ENCODE measurements at regions of chr16 and their contacts with region 1.

Region 1: DNA sequence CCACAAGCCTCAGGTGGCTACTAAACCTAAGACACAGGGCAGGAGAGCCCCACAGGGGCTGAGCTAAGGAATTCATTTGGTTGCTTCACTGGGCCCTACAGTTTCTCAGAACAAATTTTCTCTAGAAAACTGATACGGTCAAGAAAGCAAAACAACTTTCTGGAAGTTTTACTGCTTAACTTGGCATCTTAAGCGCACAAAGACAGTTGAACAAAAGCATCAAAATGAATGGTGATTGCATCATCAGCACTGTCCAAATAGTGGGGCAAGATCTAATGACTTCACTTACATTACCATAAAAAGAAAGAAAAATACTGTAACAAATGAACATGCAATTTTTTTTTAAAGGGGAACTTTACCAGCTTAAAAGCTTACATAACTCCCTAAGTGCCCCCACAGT is 47.6 kb downstream of the XPO6 start:
- DNase-seq: no peak
- ATAC-seq: no peak
- H3K4me3 ChIP-seq: no peak overlapping the region
- H3K4me3 Mint-ChIP-seq: peak overlapping the region in 4 of 10 donors; percentile 9 to 69 (median 42)
- H3K27ac ChIP-seq: no peak overlapping the region
- H3K27ac Mint-ChIP-seq: peak overlapping the region in 8 of 9 donors; percentile 43 to 95 (median 82)
- H3K4me1 ChIP-seq: peaks cover 13 to 66% of the 10 kb centered on the region in 2 donors
- H3K4me1 Mint-ChIP-seq: peaks cover 62 to 96% (median 86%) of the 10 kb centered on the region in 7 donors
- H3K27me3 ChIP-seq: no peaks in the 10 kb centered on the region
- H3K27me3 Mint-ChIP-seq: no peaks in the 10 kb centered on the region

Region 2: GRCh38 chr16:28090646-28091377 is 73.3 kb before region 1 on chr16:
- CTCF ChIA-PET with region 1: no interaction called
- POLR2A ChIA-PET with region 1: no interaction called
- intact Hi-C with region 1: no loop called
- DNase-seq: no peak
- ATAC-seq: no peak
- H3K4me3 ChIP-seq: no peak overlapping the region
- H3K4me3 Mint-ChIP-seq: no peak overlapping the region
- H3K27ac ChIP-seq: no peak overlapping the region
- H3K27ac Mint-ChIP-seq: peak overlapping the region in 7 of 9 donors; percentile 15 to 72 (median 55)
- H3K4me1 ChIP-seq: no peaks in the 10 kb centered on the region
- H3K4me1 Mint-ChIP-seq: peaks cover 0 to 9% (median 0%) of the 10 kb centered on the region in 7 donors
- H3K27me3 ChIP-seq: no peaks in the 10 kb centered on the region
- H3K27me3 Mint-ChIP-seq: no peaks in the 10 kb centered on the region

Region 3: GRCh38 chr16:28149011-28149888 is 14.9 kb before region 1 on chr16:
- CTCF ChIA-PET with region 1: interaction called, 13 read pairs
- POLR2A ChIA-PET with region 1: interaction called, 37 read pairs
- intact Hi-C with region 1: loop called in 1 of 2 experiments (anchors 1 kb)
- DNase-seq: peak in 7 of 9 donors; percentile 49 to 79 (median 73)
- ATAC-seq: peak; percentile 86
- H3K4me3 ChIP-seq: no peak overlapping the region
- H3K4me3 Mint-ChIP-seq: peak overlapping the region; percentile 49 to 81 (median 69)
- H3K27ac ChIP-seq: peak overlapping the region; percentile 61
- H3K27ac Mint-ChIP-seq: peak overlapping the region; percentile 86 to 99 (median 94)
- H3K4me1 ChIP-seq: peaks cover 32 to 66% of the 10 kb centered on the region in 2 donors
- H3K4me1 Mint-ChIP-seq: peaks cover 47 to 97% (median 88%) of the 10 kb centered on the region in 7 donors
- H3K27me3 ChIP-seq: no peaks in the 10 kb centered on the region
- H3K27me3 Mint-ChIP-seq: no peaks in the 10 kb centered on the region

Region 4: GRCh38 chr16:28181515-28181914 is 17.4 kb after region 1 on chr16:
- CTCF ChIA-PET with region 1: interaction called, 4 read pairs
- POLR2A ChIA-PET with region 1: interaction called, 7 read pairs
- intact Hi-C with region 1: loop called (anchors 1 to 2 kb)
- DNase-seq: no peak
- ATAC-seq: no peak
- H3K4me3 ChIP-seq: no peak overlapping the region
- H3K4me3 Mint-ChIP-seq: peak overlapping the region; percentile 21 to 77 (median 66)
- H3K27ac ChIP-seq: peak overlapping the region; percentile 59
- H3K27ac Mint-ChIP-seq: peak overlapping the region; percentile 62 to 96 (median 89)
- H3K4me1 ChIP-seq: peaks cover 38 to 58% of the 10 kb centered on the region in 2 donors
- H3K4me1 Mint-ChIP-seq: peaks cover 66 to 97% (median 86%) of the 10 kb centered on the region in 7 donors
- H3K27me3 ChIP-seq: no peaks in the 10 kb centered on the region
- H3K27me3 Mint-ChIP-seq: no peaks in the 10 kb centered on the region

Region 5: GRCh38 chr16:28188085-28188916 is 24.2 kb after region 1 on chr16:
- CTCF ChIA-PET with region 1: interaction called, 4 read pairs
- POLR2A ChIA-PET with region 1: interaction called, 6 read pairs
- intact Hi-C with region 1: loop called (anchors 1 to 2 kb)
- DNase-seq: no peak
- ATAC-seq: peak; percentile 10
- H3K4me3 ChIP-seq: peak overlapping the region; percentile 30
- H3K4me3 Mint-ChIP-seq: peak overlapping the region; percentile 64 to 81 (median 73)
- H3K27ac ChIP-seq: peak overlapping the region; percentile 66
- H3K27ac Mint-ChIP-seq: peak overlapping the region; percentile 75 to 95 (median 90)
- H3K4me1 ChIP-seq: peaks cover 64 to 79% of the 10 kb centered on the region in 2 donors
- H3K4me1 Mint-ChIP-seq: peaks cover 74 to 97% (median 91%) of the 10 kb centered on the region in 7 donors
- H3K27me3 ChIP-seq: no peaks in the 10 kb centered on the region
- H3K27me3 Mint-ChIP-seq: no peaks in the 10 kb centered on the region

Region 6: GRCh38 chr16:28193530-28194423 is 29.6 kb after region 1 on chr16:
- CTCF ChIA-PET with region 1: interaction called, 4 read pairs
- POLR2A ChIA-PET with region 1: interaction called, 6 read pairs
- intact Hi-C with region 1: loop called in 1 of 2 experiments (anchors 1 kb)
- DNase-seq: peak in 2 of 9 donors; percentile 45 to 55
- ATAC-seq: peak; percentile 24
- H3K4me3 ChIP-seq: peak overlapping the region; percentile 39
- H3K4me3 Mint-ChIP-seq: peak overlapping the region; percentile 73 to 87 (median 86)
- H3K27ac ChIP-seq: peak overlapping the region; percentile 77
- H3K27ac Mint-ChIP-seq: peak overlapping the region; percentile 86 to 99 (median 95)
- H3K4me1 ChIP-seq: peaks cover 43 to 75% of the 10 kb centered on the region in 2 donors
- H3K4me1 Mint-ChIP-seq: peaks cover 65 to 94% (median 84%) of the 10 kb centered on the region in 7 donors
- H3K27me3 ChIP-seq: no peaks in the 10 kb centered on the region
- H3K27me3 Mint-ChIP-seq: no peaks in the 10 kb centered on the region

Region 7: GRCh38 chr16:28264656-28265055 is 100.5 kb after region 1 on chr16:
- CTCF ChIA-PET with region 1: no interaction called
- POLR2A ChIA-PET with region 1: no interaction called
- intact Hi-C with region 1: no loop called
- DNase-seq: no peak
- ATAC-seq: no peak
- H3K4me3 ChIP-seq: no peak overlapping the region
- H3K4me3 Mint-ChIP-seq: peak overlapping the region in 5 of 10 donors; percentile 4 to 49 (median 11)
- H3K27ac ChIP-seq: no peak overlapping the region
- H3K27ac Mint-ChIP-seq: peak overlapping the region in 2 of 9 donors; percentile 28 to 33
- H3K4me1 ChIP-seq: peaks cover 0 to 13% of the 10 kb centered on the region in 2 donors
- H3K4me1 Mint-ChIP-seq: peaks cover 3 to 47% (median 23%) of the 10 kb centered on the region in 7 donors
- H3K27me3 ChIP-seq: no peaks in the 10 kb centered on the region
- H3K27me3 Mint-ChIP-seq: peaks cover 0 to 26% (median 8%) of the 10 kb centered on the region in 5 donors

Measured in naive thymus-derived CD4-positive, alpha-beta T cell (primary cell).